H1 (cell line): ENCODE measurements at regions of chr4 and their contacts with region 1.

Region 1: DNA sequence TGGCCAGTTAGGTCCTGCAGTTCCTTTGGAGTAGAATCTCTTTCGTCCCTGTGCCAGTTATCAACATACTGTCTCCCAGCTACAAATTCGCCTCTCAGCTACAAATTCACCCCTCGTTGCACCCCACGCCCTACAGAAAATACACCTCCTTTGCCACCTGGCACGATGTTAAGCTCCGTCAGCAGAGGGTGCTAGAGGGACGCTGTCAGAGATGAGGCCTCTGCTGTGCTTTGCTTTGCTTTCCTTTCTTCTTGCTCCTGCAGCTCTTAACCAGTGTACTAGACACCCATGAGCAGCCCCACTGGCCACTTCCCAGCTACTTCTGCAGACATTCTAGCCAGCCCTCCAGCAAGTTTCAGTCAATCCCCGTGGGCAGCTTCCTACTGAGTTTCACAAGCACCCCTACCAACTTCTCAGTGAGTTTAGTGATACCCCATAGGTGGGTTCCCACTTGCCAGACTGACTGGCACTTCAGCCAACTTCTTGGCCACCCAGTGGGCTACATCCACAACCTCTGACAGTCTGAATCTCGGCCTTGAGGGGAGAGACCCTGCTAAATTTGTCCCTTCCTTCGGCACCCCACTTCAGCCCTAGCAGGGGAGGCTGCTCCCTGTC is 21.8 kb downstream of the HAUS3 start:
- DNase-seq: peak in 1 of 2 experiments; percentile 91
- H3K4me3 ChIP-seq: no peak overlapping the region
- H3K27ac ChIP-seq: no peak overlapping the region
- H3K4me1 ChIP-seq: peaks cover 10 to 37% (median 19%) of the 10 kb centered on the region in 4 experiments; a peak in 6 of 7 replicates
- H3K27me3 ChIP-seq: no peaks in the 10 kb centered on the region
- CTCF ChIP-seq: peak; percentile 89 to 99 (median 93)
- EP300 ChIP-seq: no peak
- POLR2A ChIP-seq: no peak
- RAD21 ChIP-seq: peak; percentile 96 to 98

Region 2: GRCh38 chr4:2241410-2242353 is 21.6 kb after region 1 on chr4 and contains the starts of genes HAUS3 and POLN:
- CTCF ChIA-PET with region 1: interaction called, 13 read pairs
- POLR2A ChIA-PET with region 1: no interaction called
- DNase-seq: peak; percentile 95 to 99
- H3K4me3 ChIP-seq: peak within 1 kb of the TSS; percentile 75 to 94 (median 84)
- H3K27ac ChIP-seq: no peak within 1 kb of the TSS
- H3K4me1 ChIP-seq: peaks cover 0 to 2% (median 0%) of the 10 kb centered on the region in 4 experiments; a peak in 1 of 7 replicates
- H3K27me3 ChIP-seq: no peaks in the 10 kb centered on the region
- CTCF ChIP-seq: 0 out of 4 replicates have a peak, but pooled peaks of 1 of the 3 experiments have one; percentile 4
- EP300 ChIP-seq: no peak
- POLR2A ChIP-seq: peak in 1 of 2 experiments; percentile 68; a peak in 1 of 3 replicates
- RAD21 ChIP-seq: no peak
- total RNA-seq, gene HAUS3: 14.6 and 14.8 TPM in 2 replicates
- total RNA-seq, gene POLN: 1.5 and 4.2 TPM in 2 replicates

Region 3: DNA sequence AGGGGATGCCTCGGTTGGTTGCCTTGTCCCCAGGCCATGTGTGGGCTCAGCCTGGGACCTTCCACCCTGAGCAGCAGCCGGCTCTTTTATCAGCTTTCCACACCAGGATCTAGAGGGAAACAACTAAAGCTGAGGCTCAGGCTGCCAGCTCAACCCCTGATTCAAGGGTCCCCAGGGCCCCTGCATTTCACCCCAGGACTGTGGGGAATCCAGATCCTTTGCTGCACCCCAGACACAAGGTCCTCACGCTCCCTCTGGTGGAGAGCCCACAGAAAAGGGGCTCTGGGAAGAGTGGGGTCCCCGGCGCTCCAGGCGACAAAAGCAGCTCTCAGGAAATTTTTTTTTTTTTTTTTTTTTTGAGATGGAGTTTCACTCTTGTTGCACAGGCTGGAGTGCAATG is 134.0 kb after region 1 on chr4:
- CTCF ChIA-PET with region 1: interaction called, 69 read pairs
- POLR2A ChIA-PET with region 1: no interaction called
- DNase-seq: no peak
- H3K4me3 ChIP-seq: no peak overlapping the region
- H3K27ac ChIP-seq: no peak overlapping the region
- H3K4me1 ChIP-seq: peaks cover 1 to 6% (median 3%) of the 10 kb centered on the region in 4 experiments; a peak in 5 of 7 replicates
- H3K27me3 ChIP-seq: no peaks in the 10 kb centered on the region
- CTCF ChIP-seq: peak in 2 of 3 experiments; percentile 41 to 61; a peak in 3 of 4 replicates
- EP300 ChIP-seq: no peak
- POLR2A ChIP-seq: no peak
- RAD21 ChIP-seq: peak; percentile 72 to 77

Region 4: GRCh38 chr4:2412885-2413716 is 193.0 kb after region 1 on chr4:
- CTCF ChIA-PET with region 1: interaction called, 15 read pairs
- POLR2A ChIA-PET with region 1: no interaction called
- DNase-seq: peak; percentile 78 to 86
- H3K4me3 ChIP-seq: peak overlapping the region; percentile 6 to 56 (median 42); a peak in 6 of 8 replicates
- H3K27ac ChIP-seq: peak overlapping the region; percentile 68
- H3K4me1 ChIP-seq: peaks cover 12 to 36% (median 29%) of the 10 kb centered on the region in 4 experiments
- H3K27me3 ChIP-seq: peaks cover 24 to 44% (median 38%) of the 10 kb centered on the region in 4 experiments
- CTCF ChIP-seq: peak in 2 of 3 experiments; percentile 42 to 61; a peak in 3 of 4 replicates
- EP300 ChIP-seq: peak in 1 of 2 experiments; percentile 19; a peak in 1 of 3 replicates
- POLR2A ChIP-seq: peak in 1 of 2 experiments; percentile 82; a peak in 2 of 3 replicates
- RAD21 ChIP-seq: peak in 1 of 2 experiments; percentile 50; a peak in 3 of 4 replicates

Region 5: GRCh38 chr4:2423066-2423465 is 202.9 kb after region 1 on chr4:
- CTCF ChIA-PET with region 1: interaction called, 10 read pairs
- POLR2A ChIA-PET with region 1: no interaction called
- DNase-seq: no peak
- H3K4me3 ChIP-seq: no peak overlapping the region
- H3K27ac ChIP-seq: no peak overlapping the region
- H3K4me1 ChIP-seq: peaks cover 0 to 17% (median 9%) of the 10 kb centered on the region in 4 experiments; a peak in 6 of 7 replicates
- H3K27me3 ChIP-seq: peaks cover 12 to 27% (median 23%) of the 10 kb centered on the region in 4 experiments
- CTCF ChIP-seq: no peak
- EP300 ChIP-seq: no peak
- POLR2A ChIP-seq: no peak
- RAD21 ChIP-seq: no peak

Region 6: DNA sequence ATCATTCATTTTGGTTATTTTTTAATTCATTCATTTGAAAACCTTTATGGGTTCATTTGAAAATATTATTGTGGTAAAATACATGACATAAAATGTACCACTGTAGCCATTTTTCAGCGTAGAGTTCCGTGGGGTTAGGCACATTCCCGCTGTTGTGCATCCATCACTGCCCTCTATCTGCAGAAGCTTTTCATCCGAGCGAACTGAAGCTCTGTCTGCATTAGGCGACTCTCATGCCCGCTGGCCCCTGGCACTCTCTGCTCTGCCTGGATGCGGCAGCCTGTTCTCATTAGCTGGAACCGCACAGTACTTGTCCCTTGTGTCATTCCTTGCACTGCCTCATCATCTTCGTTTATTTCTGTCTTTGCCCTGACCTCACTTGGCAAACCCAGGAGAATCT is 216.2 kb after region 1 on chr4:
- CTCF ChIA-PET with region 1: interaction called, 40 read pairs
- POLR2A ChIA-PET with region 1: no interaction called
- DNase-seq: no peak
- H3K4me3 ChIP-seq: no peak overlapping the region
- H3K27ac ChIP-seq: no peak overlapping the region
- H3K4me1 ChIP-seq: peaks cover 0 to 7% (median 0%) of the 10 kb centered on the region in 4 experiments; a peak in 4 of 7 replicates
- H3K27me3 ChIP-seq: no peaks in the 10 kb centered on the region
- CTCF ChIP-seq: no peak
- EP300 ChIP-seq: no peak
- POLR2A ChIP-seq: no peak
- RAD21 ChIP-seq: peak; percentile 11 to 17; a peak in 1 of 4 replicates

Region 7: DNA sequence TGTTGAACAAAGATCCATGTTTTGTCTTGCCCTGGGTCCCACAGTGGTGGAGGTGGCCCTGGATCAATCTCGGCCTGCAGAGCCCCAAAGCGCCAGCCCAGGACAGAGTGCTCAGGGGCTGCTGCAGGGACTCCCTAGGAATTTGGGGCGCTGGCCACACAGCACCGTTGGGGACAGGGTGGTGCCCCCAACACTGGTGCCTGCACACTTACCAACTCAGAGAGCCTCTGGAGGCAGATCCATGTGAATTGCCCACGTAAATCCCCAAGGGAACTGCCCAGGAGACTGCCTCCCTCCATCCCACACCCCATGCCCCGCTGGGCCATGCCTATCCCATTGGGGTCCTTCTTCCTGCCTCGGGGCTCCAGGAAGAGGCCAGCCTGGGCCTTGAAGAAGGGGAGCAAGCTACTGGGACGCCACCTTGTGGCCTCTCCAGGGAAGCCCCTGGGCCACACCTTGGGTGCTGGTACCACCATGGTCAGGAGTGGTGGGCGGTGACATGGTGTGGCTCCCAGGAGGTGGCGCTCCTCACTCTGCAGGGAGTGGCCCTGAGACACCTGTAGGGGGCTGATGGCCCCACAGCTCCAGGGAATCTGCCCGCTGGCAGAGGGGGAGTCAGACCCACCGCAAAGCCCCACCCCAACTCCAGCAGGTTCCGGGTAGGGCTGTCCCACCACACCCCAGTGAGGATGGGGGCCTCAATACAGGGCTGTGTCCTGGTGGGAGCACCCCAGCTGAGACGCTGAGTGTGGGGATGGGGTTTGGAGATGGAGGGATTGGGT is 221.5 kb after region 1 on chr4:
- CTCF ChIA-PET with region 1: interaction called, 40 read pairs
- POLR2A ChIA-PET with region 1: no interaction called
- DNase-seq: peak; percentile 86 to 91
- H3K4me3 ChIP-seq: no peak overlapping the region
- H3K27ac ChIP-seq: no peak overlapping the region
- H3K4me1 ChIP-seq: no peaks in the 10 kb centered on the region; a peak in 3 of 7 replicates
- H3K27me3 ChIP-seq: no peaks in the 10 kb centered on the region
- CTCF ChIP-seq: peak in 2 of 3 experiments; percentile 99; a peak in 3 of 4 replicates
- EP300 ChIP-seq: no peak
- POLR2A ChIP-seq: no peak
- RAD21 ChIP-seq: peak; percentile 83 to 90